CD4-positive, alpha-beta memory T cell (primary cell): ENCODE measurements at regions of chr20 and their contacts with region 1.

Region 1: GRCh38 chr20:47610247-47610944 is 108.7 kb downstream of the NCOA3 start:
- DNase-seq: peak; percentile 30 to 93 (median 44)
- H3K4me3 ChIP-seq: no peak overlapping the region
- H3K4me3 Mint-ChIP-seq: peak overlapping the region in 7 of 8 donors; percentile 18 to 85 (median 61)
- H3K27ac ChIP-seq: peak overlapping the region; percentile 33
- H3K27ac Mint-ChIP-seq: peak overlapping the region; percentile 77 to 97 (median 94)
- H3K4me1 ChIP-seq: peaks cover 65% of the 10 kb centered on the region
- H3K4me1 Mint-ChIP-seq: peaks cover 53 to 77% (median 66%) of the 10 kb centered on the region in 4 donors
- H3K27me3 ChIP-seq: no peaks in the 10 kb centered on the region
- H3K27me3 Mint-ChIP-seq: no peaks in the 10 kb centered on the region

Region 2: DNA sequence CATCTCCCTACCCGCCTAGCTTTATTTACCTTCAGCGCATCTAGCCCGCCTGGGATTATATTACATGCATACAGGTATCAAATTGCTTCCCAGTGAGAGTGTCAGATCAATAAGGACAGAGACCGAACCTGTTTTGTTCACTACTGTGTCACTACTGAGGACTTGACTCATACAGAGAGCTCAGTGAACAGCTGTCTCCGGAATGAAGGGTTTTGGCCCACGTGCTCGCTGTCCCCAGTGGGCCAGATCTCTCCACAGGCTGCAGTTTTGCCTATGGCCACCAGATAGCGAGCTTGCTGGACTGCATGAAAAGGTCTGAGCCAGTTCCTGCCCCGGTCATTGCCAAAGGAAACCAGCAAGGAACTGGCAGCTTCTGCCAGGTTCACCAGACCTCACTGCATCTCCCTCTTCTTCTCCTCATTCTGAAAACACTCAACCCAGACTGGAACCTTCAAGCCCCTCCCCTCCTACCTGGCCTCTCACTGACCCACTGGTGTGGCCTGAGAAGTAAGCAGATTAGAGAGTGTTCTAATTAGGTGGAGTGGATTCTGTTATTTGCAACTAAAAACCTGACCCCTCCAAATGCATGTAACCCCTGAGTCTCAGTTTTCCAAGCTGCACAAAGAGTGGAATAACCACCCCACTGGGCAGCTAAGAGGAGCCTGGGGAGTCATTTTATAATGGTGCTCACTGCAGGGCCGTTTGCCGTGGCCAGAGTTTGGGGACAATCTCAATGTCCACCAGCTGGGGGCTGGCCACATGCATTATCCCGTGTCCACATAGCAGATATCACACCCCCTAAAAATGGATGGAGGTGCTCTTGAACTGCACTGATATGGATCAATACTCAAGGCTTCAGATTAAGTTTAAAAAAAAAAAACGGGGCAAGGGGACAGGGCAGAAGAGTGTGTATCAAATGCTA is 404.6 kb before region 1 on chr20:
- CTCF ChIA-PET with region 1: no interaction called
- POLR2A ChIA-PET with region 1: no interaction called
- intact Hi-C with region 1: no loop called
- DNase-seq: peak in 2 of 5 donors; percentile 44 to 47
- H3K4me3 ChIP-seq: no peak overlapping the region
- H3K4me3 Mint-ChIP-seq: no peak overlapping the region
- H3K27ac ChIP-seq: no peak overlapping the region
- H3K27ac Mint-ChIP-seq: peak overlapping the region in 1 of 7 donors; percentile 43
- H3K4me1 ChIP-seq: no peaks in the 10 kb centered on the region
- H3K4me1 Mint-ChIP-seq: peaks cover 0 to 5% (median 3%) of the 10 kb centered on the region in 4 donors
- H3K27me3 ChIP-seq: no peaks in the 10 kb centered on the region
- H3K27me3 Mint-ChIP-seq: no peaks in the 10 kb centered on the region

Region 3: GRCh38 chr20:47411161-47411560 is 199.2 kb before region 1 on chr20:
- CTCF ChIA-PET with region 1: no interaction called
- POLR2A ChIA-PET with region 1: no interaction called
- intact Hi-C with region 1: loop called (anchors 10 kb)
- DNase-seq: no peak
- H3K4me3 ChIP-seq: no peak overlapping the region
- H3K4me3 Mint-ChIP-seq: no peak overlapping the region
- H3K27ac ChIP-seq: no peak overlapping the region
- H3K27ac Mint-ChIP-seq: no peak overlapping the region
- H3K4me1 ChIP-seq: peaks cover 29% of the 10 kb centered on the region
- H3K4me1 Mint-ChIP-seq: peaks cover 11 to 31% (median 23%) of the 10 kb centered on the region in 4 donors
- H3K27me3 ChIP-seq: no peaks in the 10 kb centered on the region
- H3K27me3 Mint-ChIP-seq: no peaks in the 10 kb centered on the region

Region 4: GRCh38 chr20:47453142-47453782 is 157.1 kb before region 1 on chr20:
- CTCF ChIA-PET with region 1: no interaction called
- POLR2A ChIA-PET with region 1: no interaction called
- intact Hi-C with region 1: no loop called
- DNase-seq: no peak
- H3K4me3 ChIP-seq: no peak overlapping the region
- H3K4me3 Mint-ChIP-seq: no peak overlapping the region
- H3K27ac ChIP-seq: no peak overlapping the region
- H3K27ac Mint-ChIP-seq: peak overlapping the region in 1 of 7 donors; percentile 8
- H3K4me1 ChIP-seq: no peaks in the 10 kb centered on the region
- H3K4me1 Mint-ChIP-seq: peaks cover 0 to 4% (median 0%) of the 10 kb centered on the region in 4 donors
- H3K27me3 ChIP-seq: no peaks in the 10 kb centered on the region
- H3K27me3 Mint-ChIP-seq: no peaks in the 10 kb centered on the region

Region 5: DNA sequence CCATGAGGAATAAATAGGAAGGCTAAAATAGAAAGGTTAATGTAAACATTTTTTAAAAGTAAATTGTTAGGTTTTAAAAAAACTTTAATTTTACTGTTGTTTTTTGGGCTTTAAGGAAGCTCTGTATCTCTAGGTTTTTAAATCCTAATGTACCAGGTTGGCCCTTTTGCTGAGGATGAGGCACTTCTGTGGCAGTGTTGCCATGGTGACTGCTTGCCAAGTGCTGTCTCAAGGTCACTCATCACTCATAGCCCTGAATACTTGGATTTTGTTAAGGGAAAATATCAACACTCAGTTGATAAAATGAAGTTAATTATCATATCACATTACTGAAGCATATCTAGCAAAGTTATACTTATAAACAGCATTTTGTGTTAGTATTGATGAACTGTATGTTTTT is 58.6 kb before region 1 on chr20:
- CTCF ChIA-PET with region 1: no interaction called
- POLR2A ChIA-PET with region 1: no interaction called
- intact Hi-C with region 1: loop called (anchors 10 kb)
- DNase-seq: no peak
- H3K4me3 ChIP-seq: no peak overlapping the region
- H3K4me3 Mint-ChIP-seq: no peak overlapping the region
- H3K27ac ChIP-seq: no peak overlapping the region
- H3K27ac Mint-ChIP-seq: peak overlapping the region in 3 of 7 donors; percentile 8 to 56 (median 48)
- H3K4me1 ChIP-seq: peaks cover 14% of the 10 kb centered on the region
- H3K4me1 Mint-ChIP-seq: peaks cover 26 to 48% (median 31%) of the 10 kb centered on the region in 4 donors
- H3K27me3 ChIP-seq: no peaks in the 10 kb centered on the region
- H3K27me3 Mint-ChIP-seq: no peaks in the 10 kb centered on the region

Region 6: GRCh38 chr20:47620808-47621805 is 10.7 kb after region 1 on chr20:
- CTCF ChIA-PET with region 1: interaction called, 17 read pairs
- POLR2A ChIA-PET with region 1: no interaction called
- intact Hi-C with region 1: no loop called
- DNase-seq: peak; percentile 39 to 54 (median 46)
- H3K4me3 ChIP-seq: no peak overlapping the region
- H3K4me3 Mint-ChIP-seq: no peak overlapping the region
- H3K27ac ChIP-seq: no peak overlapping the region
- H3K27ac Mint-ChIP-seq: peak overlapping the region in 2 of 7 donors; percentile 15 to 30
- H3K4me1 ChIP-seq: no peaks in the 10 kb centered on the region
- H3K4me1 Mint-ChIP-seq: peaks cover 8 to 20% (median 12%) of the 10 kb centered on the region in 4 donors
- H3K27me3 ChIP-seq: no peaks in the 10 kb centered on the region
- H3K27me3 Mint-ChIP-seq: no peaks in the 10 kb centered on the region

Region 7: DNA sequence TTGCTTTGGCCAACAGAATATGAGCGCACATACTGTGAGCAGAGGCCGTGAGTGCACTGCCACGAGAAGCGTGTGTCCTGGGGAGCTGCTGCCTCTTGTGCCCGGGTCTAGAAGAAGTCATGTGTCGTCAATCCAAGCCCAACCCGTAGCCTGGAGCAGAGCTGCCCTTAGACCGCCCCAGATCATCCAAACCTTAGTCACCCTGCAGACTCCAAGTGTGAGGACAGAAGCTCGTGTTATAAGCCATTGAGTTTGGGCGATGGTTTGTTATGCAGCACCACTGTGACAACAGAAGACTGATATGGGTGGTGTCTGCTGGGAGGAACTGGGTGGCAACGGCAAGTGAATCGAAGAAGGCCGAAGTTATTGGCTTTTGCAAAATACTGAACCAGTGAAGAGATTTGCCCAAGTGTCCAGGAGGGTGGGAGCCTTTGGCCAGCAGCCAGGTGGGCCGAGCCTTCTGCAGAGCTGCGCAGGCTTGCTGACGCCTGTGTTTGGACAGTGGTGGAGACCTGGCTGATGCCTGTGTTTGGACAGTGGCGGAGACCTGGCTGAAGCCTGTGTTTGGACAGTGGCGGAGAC is 276.2 kb after region 1 on chr20:
- CTCF ChIA-PET with region 1: no interaction called
- POLR2A ChIA-PET with region 1: no interaction called
- intact Hi-C with region 1: no loop called
- DNase-seq: no peak
- H3K4me3 ChIP-seq: no peak overlapping the region
- H3K4me3 Mint-ChIP-seq: no peak overlapping the region
- H3K27ac ChIP-seq: no peak overlapping the region
- H3K27ac Mint-ChIP-seq: no peak overlapping the region
- H3K4me1 ChIP-seq: no peaks in the 10 kb centered on the region
- H3K4me1 Mint-ChIP-seq: no peaks in the 10 kb centered on the region
- H3K27me3 ChIP-seq: no peaks in the 10 kb centered on the region
- H3K27me3 Mint-ChIP-seq: peaks cover 5 to 7% of the 10 kb centered on the region in 2 donors